ENCODE measurements at regions of chr10 and their contacts with region 1.

Region 1: DNA sequence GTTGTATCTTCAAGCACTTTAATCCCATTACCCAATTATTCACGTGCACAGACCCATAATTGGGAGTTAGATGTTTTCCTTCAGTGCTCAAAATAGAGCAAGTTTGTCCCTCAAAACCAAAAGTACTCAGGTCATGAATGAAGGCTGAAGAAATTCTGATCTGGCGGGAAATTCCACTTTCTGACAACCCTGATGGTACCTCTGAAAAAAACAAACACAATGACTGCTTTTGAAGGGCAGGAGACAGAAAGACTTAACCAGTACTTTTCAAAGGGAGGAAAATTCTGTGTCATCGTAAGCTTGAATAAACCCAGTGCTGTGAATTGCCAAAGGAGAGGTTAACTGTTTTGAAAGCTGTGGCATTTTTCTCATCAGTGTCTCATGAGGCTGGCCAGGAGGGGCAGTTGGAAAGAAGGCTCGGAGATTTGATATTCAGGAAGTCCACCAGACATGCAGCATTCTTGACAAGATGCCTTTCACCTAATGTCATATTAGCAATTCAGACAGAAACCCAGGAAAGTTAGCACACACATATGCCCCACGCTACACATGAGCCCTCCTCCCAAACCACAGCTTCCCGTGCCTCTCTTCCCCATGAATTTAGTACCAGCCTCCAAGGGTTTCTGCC is 347.0 kb downstream of the KCNMA1 start:
- DNase-seq: peak; percentile 36
- H3K4me3 ChIP-seq: no peak overlapping the region
- H3K4me3 Mint-ChIP-seq: peak overlapping the region; percentile 37
- H3K27ac Mint-ChIP-seq: peak overlapping the region; percentile 68
- H3K4me1 ChIP-seq: peaks cover 88% of the 10 kb centered on the region
- H3K4me1 Mint-ChIP-seq: peaks cover 60% of the 10 kb centered on the region
- H3K27me3 ChIP-seq: no peaks in the 10 kb centered on the region
- H3K27me3 Mint-ChIP-seq: no peaks in the 10 kb centered on the region
- CTCF ChIP-seq: no peak

Region 2: DNA sequence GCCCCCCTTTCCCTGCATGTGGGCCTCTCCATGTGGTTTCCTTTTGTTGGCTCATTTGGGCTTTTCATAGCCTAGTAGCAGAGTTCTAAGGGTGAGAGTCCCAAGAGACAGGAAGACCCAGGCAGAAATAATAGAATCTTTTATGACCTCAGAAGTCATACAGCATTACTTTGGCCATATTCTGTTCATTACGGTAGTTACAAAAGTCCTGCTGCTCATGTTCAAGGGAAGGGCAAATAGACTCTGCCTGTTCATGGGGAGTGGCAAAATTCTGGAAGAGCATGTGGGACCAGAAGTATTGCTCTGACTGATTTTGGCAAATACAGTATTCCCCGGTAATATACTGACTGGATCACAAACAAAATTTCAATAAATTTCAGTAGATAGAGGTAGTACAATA is 948.9 kb before region 1 on chr10:
- CTCF ChIA-PET with region 1: no interaction called
- POLR2A ChIA-PET with region 1: no interaction called
- intact Hi-C with region 1: loop called (anchors 5 kb)
- DNase-seq: no peak
- H3K4me3 ChIP-seq: no peak overlapping the region
- H3K4me3 Mint-ChIP-seq: no peak overlapping the region
- H3K27ac Mint-ChIP-seq: no peak overlapping the region
- H3K4me1 ChIP-seq: peaks cover 14% of the 10 kb centered on the region
- H3K4me1 Mint-ChIP-seq: peaks cover 23% of the 10 kb centered on the region
- H3K27me3 ChIP-seq: no peaks in the 10 kb centered on the region
- H3K27me3 Mint-ChIP-seq: no peaks in the 10 kb centered on the region
- CTCF ChIP-seq: no peak

Region 3: GRCh38 chr10:77185696-77186095 is 104.9 kb before region 1 on chr10:
- CTCF ChIA-PET with region 1: no interaction called
- POLR2A ChIA-PET with region 1: no interaction called
- intact Hi-C with region 1: loop called (anchors 5 kb)
- DNase-seq: peak; percentile 60 to 67
- H3K4me3 ChIP-seq: no peak overlapping the region
- H3K4me3 Mint-ChIP-seq: peak overlapping the region; percentile 42
- H3K27ac Mint-ChIP-seq: peak overlapping the region; percentile 78
- H3K4me1 ChIP-seq: peaks cover 39% of the 10 kb centered on the region
- H3K4me1 Mint-ChIP-seq: peaks cover 32% of the 10 kb centered on the region
- H3K27me3 ChIP-seq: no peaks in the 10 kb centered on the region
- H3K27me3 Mint-ChIP-seq: no peaks in the 10 kb centered on the region
- CTCF ChIP-seq: peak in 1 of 2 experiments; percentile 39

Region 4: GRCh38 chr10:77201135-77202106 is 89.2 kb before region 1 on chr10:
- CTCF ChIA-PET with region 1: no interaction called
- POLR2A ChIA-PET with region 1: no interaction called
- intact Hi-C with region 1: no loop called
- DNase-seq: no peak
- H3K4me3 ChIP-seq: no peak overlapping the region
- H3K4me3 Mint-ChIP-seq: no peak overlapping the region
- H3K27ac Mint-ChIP-seq: no peak overlapping the region
- H3K4me1 ChIP-seq: no peaks in the 10 kb centered on the region
- H3K4me1 Mint-ChIP-seq: peaks cover 11% of the 10 kb centered on the region
- H3K27me3 ChIP-seq: no peaks in the 10 kb centered on the region
- H3K27me3 Mint-ChIP-seq: no peaks in the 10 kb centered on the region
- CTCF ChIP-seq: no peak

Region 5: DNA sequence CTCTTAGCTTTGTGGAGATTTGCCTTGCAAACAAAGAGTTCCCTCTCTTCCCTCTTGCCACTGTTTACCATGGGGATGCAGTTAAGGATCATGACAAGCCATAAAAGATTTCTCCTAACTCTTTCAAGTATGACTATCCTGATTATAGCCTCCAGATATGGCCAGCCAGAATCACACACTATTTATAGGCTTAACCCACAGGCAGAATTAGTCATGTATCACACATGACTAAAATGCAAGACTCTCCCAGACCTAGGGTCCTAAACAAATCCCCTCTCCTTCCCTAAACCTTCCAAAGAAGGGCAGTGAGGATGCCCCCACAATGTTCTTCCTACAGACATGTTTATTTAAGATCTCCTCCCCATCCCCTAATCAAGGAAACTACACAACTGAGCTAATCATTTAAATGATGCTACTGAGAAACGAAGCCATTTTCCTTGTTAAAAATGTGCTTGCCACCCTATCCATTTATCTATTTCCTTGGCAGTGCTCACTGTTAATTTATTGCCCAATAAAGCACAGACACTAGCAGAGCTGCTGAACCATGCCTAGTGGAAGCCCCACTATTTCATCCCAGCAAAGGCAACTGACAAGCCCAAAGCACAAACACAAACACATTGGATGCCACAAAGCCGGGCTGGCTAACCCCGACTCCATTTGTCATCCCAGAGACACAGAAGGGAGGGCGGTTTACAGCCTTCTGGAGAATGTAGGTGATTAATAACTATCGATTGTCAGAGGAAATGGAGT is 16.4 kb before region 1 on chr10:
- CTCF ChIA-PET with region 1: interaction called, 3 read pairs
- POLR2A ChIA-PET with region 1: no interaction called
- intact Hi-C with region 1: loop called (anchors 2 kb)
- DNase-seq: peak in 1 of 2 experiments; percentile 35
- H3K4me3 ChIP-seq: no peak overlapping the region
- H3K4me3 Mint-ChIP-seq: no peak overlapping the region
- H3K27ac Mint-ChIP-seq: no peak overlapping the region
- H3K4me1 ChIP-seq: peaks cover 35% of the 10 kb centered on the region
- H3K4me1 Mint-ChIP-seq: peaks cover 29% of the 10 kb centered on the region
- H3K27me3 ChIP-seq: no peaks in the 10 kb centered on the region
- H3K27me3 Mint-ChIP-seq: no peaks in the 10 kb centered on the region
- CTCF ChIP-seq: no peak

Region 6: GRCh38 chr10:77391605-77392235 is 101.1 kb after region 1 on chr10:
- CTCF ChIA-PET with region 1: interaction called, 3 read pairs
- POLR2A ChIA-PET with region 1: no interaction called
- intact Hi-C with region 1: loop called (anchors 1 kb)
- DNase-seq: peak; percentile 79 to 81
- H3K4me3 ChIP-seq: no peak overlapping the region
- H3K4me3 Mint-ChIP-seq: no peak overlapping the region
- H3K27ac Mint-ChIP-seq: no peak overlapping the region
- H3K4me1 ChIP-seq: peaks cover 50% of the 10 kb centered on the region
- H3K4me1 Mint-ChIP-seq: peaks cover 40% of the 10 kb centered on the region
- H3K27me3 ChIP-seq: no peaks in the 10 kb centered on the region
- H3K27me3 Mint-ChIP-seq: no peaks in the 10 kb centered on the region
- CTCF ChIP-seq: peak; percentile 42 to 65

Region 7: GRCh38 chr10:77452952-77453564 is 162.4 kb after region 1 on chr10:
- CTCF ChIA-PET with region 1: no interaction called
- POLR2A ChIA-PET with region 1: no interaction called
- intact Hi-C with region 1: loop called (anchors 1 kb)
- DNase-seq: peak; percentile 51 to 58
- H3K4me3 ChIP-seq: no peak overlapping the region
- H3K4me3 Mint-ChIP-seq: no peak overlapping the region
- H3K27ac Mint-ChIP-seq: peak overlapping the region; percentile 59
- H3K4me1 ChIP-seq: peaks cover 37% of the 10 kb centered on the region
- H3K4me1 Mint-ChIP-seq: peaks cover 49% of the 10 kb centered on the region
- H3K27me3 ChIP-seq: no peaks in the 10 kb centered on the region
- H3K27me3 Mint-ChIP-seq: no peaks in the 10 kb centered on the region
- CTCF ChIP-seq: no peak

Region 8: GRCh38 chr10:77494327-77494726 is 203.7 kb after region 1 on chr10:
- CTCF ChIA-PET with region 1: no interaction called
- POLR2A ChIA-PET with region 1: no interaction called
- intact Hi-C with region 1: loop called (anchors 10 kb)
- DNase-seq: peak in 1 of 2 experiments; percentile 38
- H3K4me3 ChIP-seq: no peak overlapping the region
- H3K4me3 Mint-ChIP-seq: no peak overlapping the region
- H3K27ac Mint-ChIP-seq: no peak overlapping the region
- H3K4me1 ChIP-seq: peaks cover 9% of the 10 kb centered on the region
- H3K4me1 Mint-ChIP-seq: peaks cover 12% of the 10 kb centered on the region
- H3K27me3 ChIP-seq: no peaks in the 10 kb centered on the region
- H3K27me3 Mint-ChIP-seq: no peaks in the 10 kb centered on the region
- CTCF ChIP-seq: peak; percentile 34 to 48